ENCODE measurements at regions of chr10 and their contacts with region 1.

Region 1: DNA sequence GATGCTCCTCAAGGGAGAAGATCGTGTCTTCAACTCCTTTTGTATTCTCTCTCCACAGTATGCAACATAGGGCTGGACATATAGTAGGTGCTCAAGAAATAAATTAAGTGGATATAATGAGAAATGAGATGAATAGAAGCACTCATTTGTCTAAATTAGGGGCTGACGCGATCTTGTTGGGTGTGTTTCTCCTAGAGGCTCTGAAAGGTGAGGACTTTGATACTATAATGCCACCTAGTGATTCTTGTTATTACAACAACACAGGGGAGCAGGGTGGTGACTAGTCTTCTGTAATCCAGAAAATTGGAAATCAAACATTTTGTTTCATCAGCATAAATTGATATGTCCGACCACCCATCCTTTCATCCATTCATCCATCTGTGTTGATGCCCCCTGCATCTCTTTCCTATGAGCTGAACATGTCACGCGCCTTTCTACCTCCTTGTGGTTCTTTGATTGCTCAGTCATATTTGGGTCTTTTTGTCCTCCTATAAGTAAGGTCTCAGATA is 3.5 kb upstream of the CFAP58 start:
- DNase-seq: no peak

Region 2: DNA sequence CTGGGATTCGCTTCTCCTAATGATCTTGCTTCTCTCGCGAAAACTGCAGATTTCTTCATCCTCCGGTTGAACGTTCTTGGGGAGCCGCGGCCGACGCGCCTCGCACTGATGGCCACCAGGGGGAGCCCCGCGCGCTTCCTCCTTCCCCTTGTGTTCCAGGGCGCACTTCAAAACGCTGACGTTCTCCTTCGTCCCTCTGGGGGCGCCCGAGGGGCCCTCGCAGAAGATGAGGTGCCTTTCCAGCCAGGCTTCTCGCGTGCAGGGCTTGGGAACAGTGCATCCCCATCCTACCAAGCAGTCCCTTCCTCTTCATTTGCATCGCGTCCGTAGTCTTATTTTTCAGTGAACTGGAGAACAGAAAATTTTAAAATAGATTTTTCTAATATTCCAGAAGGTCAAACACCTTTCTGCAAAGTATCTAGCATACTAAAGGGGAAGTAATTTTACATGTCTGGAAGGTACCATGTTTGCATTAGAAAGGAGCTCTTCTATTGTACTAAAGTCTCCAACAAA is 58.7 kb before region 1 on chr10:
- intact Hi-C with region 1: loop called (anchors 1 kb)
- DNase-seq: peak; percentile 79 to 99 (median 90)

Region 3: DNA sequence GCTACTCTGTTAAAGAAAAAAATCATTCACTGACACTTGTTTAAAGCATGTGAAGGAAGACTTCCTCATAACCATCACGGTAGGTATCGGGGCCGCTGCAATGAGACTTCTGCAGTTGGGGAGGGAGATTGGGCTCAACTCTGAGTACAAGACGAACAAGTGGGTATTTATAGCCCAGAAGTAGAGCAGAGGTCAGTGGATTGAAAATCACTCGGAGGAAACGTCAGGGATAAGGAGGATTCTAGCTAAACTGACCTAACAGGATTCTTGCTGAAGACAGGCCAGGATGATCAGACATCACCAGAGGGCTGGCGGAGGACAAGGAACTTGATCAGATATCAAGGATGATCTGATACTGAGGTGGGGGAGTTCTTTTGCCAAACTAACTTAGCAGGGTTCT is 45.2 kb before region 1 on chr10:
- intact Hi-C with region 1: loop called (anchors 1 kb)
- DNase-seq: peak in 1 of 10 donors; percentile 14

Region 4: GRCh38 chr10:104424719-104425118 is 74.5 kb after region 1 on chr10:
- intact Hi-C with region 1: no loop called
- DNase-seq: no peak